ENCODE measurements at regions of chr10 and their contacts with region 1.

Region 1: GRCh38 chr10:71486484-71487114 is 89.9 kb downstream of the CDH23 start:
- DNase-seq: peak; percentile 90
- ATAC-seq: peak; percentile 93
- H3K4me3 Mint-ChIP-seq: no peak overlapping the region
- H3K27ac Mint-ChIP-seq: no peak overlapping the region
- H3K4me1 Mint-ChIP-seq: peaks cover 3% of the 10 kb centered on the region; the same call in 1 of the 2 replicates
- H3K27me3 Mint-ChIP-seq: peaks cover 11% of the 10 kb centered on the region
- CTCF ChIP-seq: peak; percentile 82

Region 2: DNA sequence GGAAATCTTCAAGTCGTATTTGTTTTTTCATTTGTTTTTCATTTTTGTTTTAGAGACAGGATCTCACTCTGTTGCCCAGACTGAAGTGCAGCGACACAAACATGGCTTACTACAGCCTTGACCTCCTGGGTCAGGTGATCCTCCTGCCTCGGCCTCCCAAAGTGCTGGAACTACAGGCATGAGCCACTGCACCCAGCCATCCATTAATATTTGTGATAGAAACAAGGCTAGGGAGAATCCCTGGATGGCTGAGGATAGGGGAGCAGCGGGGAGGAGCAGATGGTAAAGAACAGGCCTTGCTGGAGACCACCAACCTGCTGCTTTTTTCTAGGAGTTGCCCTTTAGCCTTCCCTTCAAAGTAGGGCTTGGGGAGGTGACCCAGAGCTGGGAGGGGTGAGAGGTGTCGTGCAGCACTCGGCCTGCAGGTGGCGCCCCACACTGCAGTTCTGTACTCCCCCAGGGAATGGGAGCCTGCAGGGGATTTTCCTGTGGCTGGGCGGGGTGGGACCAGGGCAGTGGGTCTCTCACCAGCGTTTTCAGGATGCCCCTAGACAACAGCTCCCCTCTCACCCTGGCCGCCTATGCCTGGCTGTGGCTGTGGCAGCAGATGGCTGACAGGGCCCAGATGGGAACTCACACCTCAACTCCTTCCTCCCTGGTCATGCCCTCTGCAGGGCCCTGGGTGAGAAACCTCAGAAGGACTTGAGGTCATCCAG is 102.5 kb before region 1 on chr10:
- CTCF ChIA-PET with region 1: interaction called, 11 read pairs
- POLR2A ChIA-PET with region 1: no interaction called
- DNase-seq: peak; percentile 93
- ATAC-seq: peak; percentile 97
- H3K4me3 Mint-ChIP-seq: no peak overlapping the region
- H3K27ac Mint-ChIP-seq: no peak overlapping the region
- H3K4me1 Mint-ChIP-seq: no peaks in the 10 kb centered on the region
- H3K27me3 Mint-ChIP-seq: no peaks in the 10 kb centered on the region
- CTCF ChIP-seq: peak; percentile 96

Region 3: DNA sequence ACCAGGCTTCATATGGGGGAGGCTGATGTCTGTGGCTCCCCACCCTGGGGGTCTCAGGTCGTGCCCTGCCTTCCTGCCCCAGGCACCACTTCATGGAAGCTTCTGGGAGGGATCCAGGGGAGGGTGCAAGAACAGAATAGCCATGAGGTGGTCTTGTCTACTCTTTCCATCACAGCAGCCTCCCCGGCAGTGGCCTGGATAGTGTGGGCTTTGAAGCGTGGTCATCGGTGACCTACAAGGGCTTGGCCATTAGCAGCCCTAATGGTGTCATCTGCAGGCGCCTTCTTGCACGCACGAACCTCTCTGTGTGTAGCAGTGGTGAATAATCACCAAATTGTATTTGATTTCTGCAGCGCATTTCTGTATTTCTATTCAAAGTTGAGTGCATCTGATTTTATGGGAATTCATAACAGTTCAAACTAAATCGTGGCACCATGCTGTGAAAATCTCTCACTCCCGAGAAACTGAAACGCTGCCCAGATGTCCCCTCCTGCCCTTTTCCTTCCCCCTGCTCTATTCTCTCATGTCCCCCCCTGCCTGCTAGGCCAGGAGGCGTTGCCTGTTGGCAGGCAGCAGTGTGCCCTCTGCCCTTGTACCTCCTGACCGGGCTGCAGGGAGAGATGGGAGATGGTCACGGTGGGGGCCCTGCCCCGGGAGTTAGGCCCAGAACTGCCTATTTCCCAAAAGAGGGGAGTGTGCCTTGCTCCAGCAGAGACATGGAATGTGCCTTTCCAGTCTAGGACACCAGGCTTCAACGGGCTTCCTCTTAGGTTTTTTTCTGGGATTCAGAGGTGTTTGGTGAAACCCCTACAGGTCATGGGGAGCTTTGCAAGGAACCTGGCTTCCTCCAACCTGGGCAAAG is 55.1 kb before region 1 on chr10:
- CTCF ChIA-PET with region 1: interaction called, 10 read pairs
- POLR2A ChIA-PET with region 1: no interaction called
- DNase-seq: peak; percentile 43
- ATAC-seq: peak; percentile 84
- H3K4me3 Mint-ChIP-seq: no peak overlapping the region
- H3K27ac Mint-ChIP-seq: no peak overlapping the region
- H3K4me1 Mint-ChIP-seq: peaks cover 9% of the 10 kb centered on the region
- H3K27me3 Mint-ChIP-seq: no peaks in the 10 kb centered on the region; the same call in 1 of the 2 replicates
- CTCF ChIP-seq: no peak

Region 4: GRCh38 chr10:71496927-71497762 is 10.5 kb after region 1 on chr10:
- CTCF ChIA-PET with region 1: interaction called, 20 read pairs
- POLR2A ChIA-PET with region 1: no interaction called
- DNase-seq: no peak
- ATAC-seq: peak; percentile 55
- H3K4me3 Mint-ChIP-seq: no peak overlapping the region
- H3K27ac Mint-ChIP-seq: no peak overlapping the region
- H3K4me1 Mint-ChIP-seq: peaks cover 32% of the 10 kb centered on the region
- H3K27me3 Mint-ChIP-seq: peaks cover 91% of the 10 kb centered on the region
- CTCF ChIP-seq: no peak

Region 5: GRCh38 chr10:71569775-71570588 is 83.4 kb after region 1 on chr10:
- CTCF ChIA-PET with region 1: interaction called, 50 read pairs
- POLR2A ChIA-PET with region 1: no interaction called
- DNase-seq: peak; percentile 92
- ATAC-seq: peak; percentile 62
- H3K4me3 Mint-ChIP-seq: no peak overlapping the region
- H3K27ac Mint-ChIP-seq: no peak overlapping the region
- H3K4me1 Mint-ChIP-seq: peaks cover 7% of the 10 kb centered on the region
- H3K27me3 Mint-ChIP-seq: no peaks in the 10 kb centered on the region; the same call in 1 of the 2 replicates
- CTCF ChIP-seq: peak; percentile 91

Region 6: GRCh38 chr10:71623098-71623985 is 136.7 kb after region 1 on chr10:
- CTCF ChIA-PET with region 1: interaction called, 11 read pairs
- POLR2A ChIA-PET with region 1: no interaction called
- DNase-seq: peak; percentile 45
- ATAC-seq: peak; percentile 40
- H3K4me3 Mint-ChIP-seq: peak overlapping the region; percentile 58
- H3K27ac Mint-ChIP-seq: peak overlapping the region; percentile 67
- H3K4me1 Mint-ChIP-seq: peaks cover 71% of the 10 kb centered on the region
- H3K27me3 Mint-ChIP-seq: peaks cover 1% of the 10 kb centered on the region
- CTCF ChIP-seq: no peak

Measured in WTC11 (cell line).